H1 (cell line): ENCODE measurements at regions of chr6 and their contacts with region 1.

Region 1: GRCh38 chr6:138287144-138287955 is 69.1 kb upstream of the PBOV1 start:
- DNase-seq: peak in 1 of 2 experiments; percentile 81
- H3K4me3 ChIP-seq: no peak overlapping the region
- H3K27ac ChIP-seq: no peak overlapping the region
- H3K4me1 ChIP-seq: peaks cover 2 to 8% (median 4%) of the 10 kb centered on the region in 4 experiments; a peak in 5 of 7 replicates
- H3K27me3 ChIP-seq: no peaks in the 10 kb centered on the region
- CTCF ChIP-seq: peak; percentile 74 to 90 (median 83)
- EP300 ChIP-seq: no peak
- POLR2A ChIP-seq: no peak
- RAD21 ChIP-seq: peak; percentile 62 to 70

Region 2: DNA sequence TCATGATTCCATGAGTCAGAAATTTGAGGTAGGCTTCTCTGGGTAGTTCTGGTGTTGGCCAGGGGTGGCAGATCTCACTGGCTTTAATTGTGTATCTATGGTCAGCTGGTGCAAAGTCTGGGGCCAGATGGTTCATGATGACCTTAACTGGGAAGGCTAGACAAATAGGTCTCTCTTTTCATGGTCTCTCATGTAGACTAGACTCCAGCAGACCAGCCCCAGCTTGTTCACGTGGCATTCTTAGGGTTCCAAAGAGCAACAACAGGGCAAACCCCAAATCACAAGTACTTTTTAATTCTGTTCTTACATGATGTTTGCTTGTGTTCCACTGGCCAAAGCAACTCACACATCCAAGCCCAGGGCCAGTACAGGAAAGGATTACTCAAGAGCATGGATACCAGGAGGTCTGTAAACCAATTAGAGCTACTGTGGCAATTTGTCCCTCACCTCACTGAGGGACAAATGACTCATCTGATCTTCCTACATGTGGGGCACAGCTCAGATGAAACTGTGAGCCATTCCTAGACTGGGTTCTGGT is 10.5 kb after region 1 on chr6:
- CTCF ChIA-PET with region 1: interaction called, 17 read pairs
- POLR2A ChIA-PET with region 1: no interaction called
- DNase-seq: no peak
- H3K4me3 ChIP-seq: no peak overlapping the region
- H3K27ac ChIP-seq: no peak overlapping the region
- H3K4me1 ChIP-seq: no peaks in the 10 kb centered on the region
- H3K27me3 ChIP-seq: no peaks in the 10 kb centered on the region
- CTCF ChIP-seq: no peak
- EP300 ChIP-seq: no peak
- POLR2A ChIP-seq: no peak
- RAD21 ChIP-seq: no peak

Region 3: DNA sequence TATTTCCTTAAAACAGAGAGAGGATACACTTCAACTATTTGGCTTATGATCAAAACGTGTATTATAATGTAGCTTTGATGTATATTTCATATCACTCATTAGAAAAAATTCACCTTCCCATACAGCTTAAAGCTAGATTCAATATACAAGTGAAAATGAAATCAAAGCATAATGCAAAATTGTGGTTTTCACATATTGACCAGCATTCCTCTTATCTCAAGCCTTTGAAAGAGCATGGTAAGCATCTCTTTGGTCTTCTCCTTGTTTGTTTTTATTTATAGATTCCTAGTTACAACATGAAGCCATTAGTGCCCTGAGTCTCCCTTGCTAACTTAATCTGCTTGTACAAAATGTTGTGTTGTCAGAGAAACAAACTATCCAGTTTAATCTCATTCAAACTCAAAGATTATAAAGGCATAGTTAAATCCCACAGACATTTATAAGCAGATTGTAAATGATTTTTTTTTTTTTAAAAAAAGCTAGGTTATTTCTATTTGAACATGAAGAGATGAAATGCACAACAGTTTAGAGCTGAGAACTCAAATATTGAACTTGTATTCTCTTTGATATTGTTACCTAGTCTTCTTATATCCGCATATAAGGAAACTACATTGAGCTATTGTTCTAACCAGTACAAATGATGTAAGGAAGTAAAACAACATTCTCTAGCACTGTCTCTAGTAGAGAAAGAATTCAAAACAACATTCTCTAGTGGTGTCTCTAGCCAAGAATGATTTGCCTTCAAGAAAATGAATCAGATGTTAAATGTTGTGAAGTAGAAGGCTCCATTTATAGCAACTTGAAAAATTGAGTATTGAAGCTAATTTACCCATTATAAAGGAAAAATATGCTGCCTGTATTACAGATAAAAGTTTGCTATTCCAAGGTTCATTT is 59.2 kb after region 1 on chr6:
- CTCF ChIA-PET with region 1: interaction called, 13 read pairs
- POLR2A ChIA-PET with region 1: no interaction called
- DNase-seq: no peak
- H3K4me3 ChIP-seq: no peak overlapping the region
- H3K27ac ChIP-seq: no peak overlapping the region
- H3K4me1 ChIP-seq: peaks cover 0 to 3% (median 1%) of the 10 kb centered on the region in 4 experiments; a peak in 3 of 7 replicates
- H3K27me3 ChIP-seq: no peaks in the 10 kb centered on the region
- CTCF ChIP-seq: no peak
- EP300 ChIP-seq: no peak
- POLR2A ChIP-seq: no peak
- RAD21 ChIP-seq: no peak

Region 4: DNA sequence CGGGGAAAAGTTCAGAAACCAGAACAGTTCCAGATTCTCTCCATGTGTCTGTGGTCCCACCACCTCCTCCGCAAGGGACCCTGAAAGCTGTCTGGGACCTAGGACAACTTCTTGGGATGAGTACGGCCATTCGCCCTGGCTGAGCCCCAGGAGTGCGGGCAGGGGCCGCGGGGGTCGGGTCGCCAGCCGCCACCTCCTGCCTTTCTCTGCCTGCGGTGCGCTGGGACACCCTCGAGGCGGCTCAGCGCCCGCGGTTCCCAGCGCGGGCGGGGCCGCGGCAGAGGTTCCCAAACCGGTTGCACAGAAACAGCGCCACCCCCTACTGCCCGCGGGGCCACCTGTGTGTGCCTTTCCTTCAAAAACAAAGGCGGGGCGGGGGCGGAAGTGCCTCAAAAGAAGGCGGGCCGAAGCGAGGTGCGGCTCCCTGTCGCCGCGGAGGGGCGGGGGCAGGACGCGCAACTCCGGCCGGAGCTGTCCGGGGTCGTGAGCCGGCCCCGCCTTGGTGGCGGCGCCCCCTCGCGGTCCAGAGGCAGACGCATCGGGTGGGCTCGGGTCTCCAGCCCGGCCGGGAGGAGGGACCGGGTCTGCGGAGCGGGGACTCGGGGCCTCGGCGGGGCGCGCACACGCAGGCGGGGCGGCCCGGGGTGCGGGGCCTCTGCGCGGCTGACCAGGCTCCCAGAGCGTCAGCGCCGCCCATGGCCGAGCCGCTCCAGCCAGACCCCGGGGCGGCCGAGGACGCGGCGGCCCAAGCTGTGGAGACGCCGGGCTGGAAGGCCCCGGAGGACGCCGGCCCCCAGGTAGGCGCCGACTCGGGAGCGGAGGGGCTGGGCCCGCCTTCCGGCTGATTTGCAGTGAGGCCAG is 116.7 kb after region 1 on chr6 and contains the start of gene HEBP2:
- CTCF ChIA-PET with region 1: interaction called, 12 read pairs
- POLR2A ChIA-PET with region 1: no interaction called
- DNase-seq: peak; percentile 92 to 97
- H3K4me3 ChIP-seq: peak within 1 kb of the TSS; percentile 57 to 86 (median 82)
- H3K27ac ChIP-seq: peak within 1 kb of the TSS; percentile 77
- H3K4me1 ChIP-seq: peaks cover 0 to 3% (median 0%) of the 10 kb centered on the region in 4 experiments; a peak in 3 of 7 replicates
- H3K27me3 ChIP-seq: no peaks in the 10 kb centered on the region; a peak in 1 of 7 replicates
- CTCF ChIP-seq: peak; percentile 79 to 83 (median 80)
- EP300 ChIP-seq: peak; percentile 25 to 92; a peak in 2 of 3 replicates
- POLR2A ChIP-seq: peak in 1 of 2 experiments; percentile 79; a peak in 2 of 3 replicates
- RAD21 ChIP-seq: peak; percentile 78 to 80
- total RNA-seq, gene HEBP2: 37.9 and 42.8 TPM in 2 replicates